PC-9 (cell line): ENCODE measurements at regions of chr3 and their contacts with region 1.

Region 1: GRCh38 chr3:193772422-193772763 is 179.4 kb downstream of the OPA1 start:
- DNase-seq: no peak
- H3K4me3 ChIP-seq: no peak overlapping the region
- H3K27ac ChIP-seq: no peak overlapping the region
- H3K4me1 ChIP-seq: no peaks in the 10 kb centered on the region
- H3K27me3 ChIP-seq: no peaks in the 10 kb centered on the region
- CTCF ChIP-seq: no peak

Region 2: DNA sequence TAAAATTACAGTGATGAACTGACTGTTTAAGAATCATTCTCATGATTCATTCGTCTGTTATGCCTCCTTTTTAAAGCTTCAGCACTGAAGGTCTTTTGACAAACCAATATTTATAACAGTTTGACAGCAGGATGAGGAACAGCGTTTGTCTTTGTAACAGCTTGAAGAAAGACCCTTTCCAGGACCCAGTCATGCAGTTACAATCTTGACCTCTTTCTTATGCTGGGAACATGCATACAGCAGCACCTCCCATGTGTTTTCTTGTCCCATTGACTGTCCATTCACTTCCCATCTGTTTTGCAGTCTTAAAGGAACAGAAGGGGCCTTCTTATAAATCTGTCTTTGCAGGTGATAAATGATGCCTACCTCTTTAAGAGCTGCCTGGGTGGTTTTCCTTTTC is 92.2 kb before region 1 on chr3:
- CTCF ChIA-PET with region 1: no interaction called
- POLR2A ChIA-PET with region 1: no interaction called
- intact Hi-C with region 1: loop called (anchors 10 kb)
- DNase-seq: no peak
- H3K4me3 ChIP-seq: no peak overlapping the region
- H3K27ac ChIP-seq: no peak overlapping the region
- H3K4me1 ChIP-seq: no peaks in the 10 kb centered on the region
- H3K27me3 ChIP-seq: no peaks in the 10 kb centered on the region
- CTCF ChIP-seq: no peak

Region 3: GRCh38 chr3:193746832-193747231 is 25.6 kb before region 1 on chr3:
- CTCF ChIA-PET with region 1: no interaction called
- POLR2A ChIA-PET with region 1: interaction called, 11 read pairs
- intact Hi-C with region 1: no loop called
- DNase-seq: no peak
- H3K4me3 ChIP-seq: no peak overlapping the region
- H3K27ac ChIP-seq: no peak overlapping the region
- H3K4me1 ChIP-seq: peaks cover 7% of the 10 kb centered on the region; the same call in 1 of the 2 replicates
- H3K27me3 ChIP-seq: no peaks in the 10 kb centered on the region
- CTCF ChIP-seq: no peak

Region 4: DNA sequence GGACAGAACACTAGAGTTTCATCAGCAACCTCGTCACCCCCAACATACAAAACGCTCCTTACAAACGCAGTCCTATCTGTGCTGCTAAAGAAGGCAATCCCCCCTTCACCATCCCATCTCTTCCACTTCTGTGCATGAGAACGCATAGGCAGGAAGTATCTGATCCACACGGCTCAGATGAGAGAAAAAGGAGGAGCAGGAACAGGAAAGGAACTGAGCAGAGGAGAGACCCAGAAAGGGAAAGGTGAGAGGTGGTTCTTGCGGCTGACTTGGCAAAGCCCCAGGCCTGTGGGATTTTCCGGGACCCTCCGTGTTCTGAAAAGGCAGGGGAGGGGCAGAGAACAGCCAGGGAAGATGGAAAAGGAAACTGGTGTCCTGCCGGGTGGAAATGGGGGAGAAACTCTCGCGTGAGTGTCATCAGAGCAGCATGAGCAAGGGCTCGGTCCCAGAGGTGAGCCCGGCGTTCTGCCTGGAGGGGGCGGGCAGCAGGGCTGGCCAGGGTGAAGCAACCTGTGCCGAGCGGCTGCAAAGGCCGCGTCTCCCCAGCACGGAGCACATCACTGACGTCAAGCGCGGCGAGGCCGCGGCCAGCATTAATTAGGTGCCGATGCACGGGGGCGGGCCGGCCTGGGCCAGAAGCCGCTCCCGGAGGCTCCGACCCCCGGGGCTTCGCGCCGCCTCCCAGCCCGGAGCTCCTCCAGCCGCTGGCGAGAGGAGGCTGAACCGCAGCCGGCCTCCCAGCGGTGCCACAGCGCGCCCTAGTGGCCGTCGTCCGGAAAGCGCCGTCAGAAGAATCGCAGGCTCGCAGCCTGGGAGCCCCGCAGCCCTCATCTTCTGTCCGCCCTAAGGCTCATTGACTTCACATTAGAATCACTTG is 542.9 kb after region 1 on chr3:
- CTCF ChIA-PET with region 1: no interaction called
- POLR2A ChIA-PET with region 1: no interaction called
- intact Hi-C with region 1: no loop called
- DNase-seq: peak; percentile 91 to 97
- H3K4me3 ChIP-seq: peak overlapping the region; percentile 51
- H3K27ac ChIP-seq: peak overlapping the region; percentile 75
- H3K4me1 ChIP-seq: peaks cover 27% of the 10 kb centered on the region
- H3K27me3 ChIP-seq: no peaks in the 10 kb centered on the region
- CTCF ChIP-seq: peak; percentile 99